ENCODE measurements at regions of chr10 and their contacts with region 1.

Region 1: GRCh38 chr10:26725837-26726727 is 28.6 kb downstream of the PDSS1 start:
- DNase-seq: peak; percentile 24 to 88 (median 76)

Region 2: DNA sequence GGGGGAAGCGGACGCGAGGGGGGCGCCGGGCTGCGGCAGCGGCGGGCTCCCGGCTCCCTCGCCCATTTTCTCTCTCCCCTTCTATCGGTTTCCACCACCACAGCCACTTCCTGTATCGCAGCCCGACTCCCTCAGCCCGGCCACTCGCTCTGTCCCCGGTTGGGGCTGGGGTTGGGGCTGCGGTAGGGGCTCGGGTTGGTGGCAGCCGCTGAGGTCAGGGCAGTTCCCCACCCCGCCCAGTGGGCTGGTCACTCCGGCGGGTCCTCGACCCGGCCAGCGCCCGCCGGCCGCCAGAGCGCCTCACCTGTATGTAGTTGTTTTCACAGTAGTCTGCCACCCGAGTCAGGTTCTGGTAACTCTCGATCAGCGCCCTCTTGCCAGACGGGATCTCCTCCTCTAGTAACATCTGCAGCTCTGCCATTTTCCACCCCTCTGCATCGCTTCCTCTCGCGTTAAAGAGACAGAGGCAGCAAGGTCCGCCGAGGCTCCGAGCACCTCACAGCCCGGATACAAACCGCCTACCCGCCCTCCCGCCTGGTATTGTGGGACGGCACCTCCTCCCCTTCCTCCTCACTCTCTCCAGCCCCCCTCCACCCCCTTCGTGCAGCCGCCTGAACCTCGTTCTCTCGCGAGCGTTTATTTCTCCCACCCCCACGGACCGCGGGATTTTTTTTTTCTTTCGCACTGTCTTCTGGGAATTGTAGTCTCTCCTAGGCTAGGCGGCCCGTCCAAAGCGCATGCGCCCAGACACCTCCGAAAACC is 134.5 kb after region 1 on chr10 and contains the start of gene ABI1:
- intact Hi-C with region 1: loop called (anchors 5 kb)
- DNase-seq: peak; percentile 90 to 99 (median 97)